ENCODE measurements at regions of chr1 and their contacts with region 1.

Region 1: GRCh38 chr1:150629115-150629928 is at the start of gene ENSA:
- DNase-seq: peak; percentile 97
- H3K4me3 Mint-ChIP-seq: no peak within 1 kb of the TSS
- H3K27ac Mint-ChIP-seq: no peak within 1 kb of the TSS
- H3K4me1 Mint-ChIP-seq: peaks cover 41% of the 10 kb centered on the region
- H3K27me3 Mint-ChIP-seq: no peaks in the 10 kb centered on the region
- total RNA-seq, gene ENSA: 212 to 219 TPM

Region 2: GRCh38 chr1:150567717-150568593 is 61.4 kb before region 1 on chr1:
- CTCF ChIA-PET with region 1: interaction called, 243 read pairs
- POLR2A ChIA-PET with region 1: interaction called, 85 read pairs
- intact Hi-C with region 1: loop called (anchors 1 kb)
- DNase-seq: peak; percentile 68
- H3K4me3 Mint-ChIP-seq: peak overlapping the region; percentile 69
- H3K27ac Mint-ChIP-seq: peak overlapping the region; percentile 98
- H3K4me1 Mint-ChIP-seq: peaks cover 93% of the 10 kb centered on the region
- H3K27me3 Mint-ChIP-seq: no peaks in the 10 kb centered on the region

Region 3: DNA sequence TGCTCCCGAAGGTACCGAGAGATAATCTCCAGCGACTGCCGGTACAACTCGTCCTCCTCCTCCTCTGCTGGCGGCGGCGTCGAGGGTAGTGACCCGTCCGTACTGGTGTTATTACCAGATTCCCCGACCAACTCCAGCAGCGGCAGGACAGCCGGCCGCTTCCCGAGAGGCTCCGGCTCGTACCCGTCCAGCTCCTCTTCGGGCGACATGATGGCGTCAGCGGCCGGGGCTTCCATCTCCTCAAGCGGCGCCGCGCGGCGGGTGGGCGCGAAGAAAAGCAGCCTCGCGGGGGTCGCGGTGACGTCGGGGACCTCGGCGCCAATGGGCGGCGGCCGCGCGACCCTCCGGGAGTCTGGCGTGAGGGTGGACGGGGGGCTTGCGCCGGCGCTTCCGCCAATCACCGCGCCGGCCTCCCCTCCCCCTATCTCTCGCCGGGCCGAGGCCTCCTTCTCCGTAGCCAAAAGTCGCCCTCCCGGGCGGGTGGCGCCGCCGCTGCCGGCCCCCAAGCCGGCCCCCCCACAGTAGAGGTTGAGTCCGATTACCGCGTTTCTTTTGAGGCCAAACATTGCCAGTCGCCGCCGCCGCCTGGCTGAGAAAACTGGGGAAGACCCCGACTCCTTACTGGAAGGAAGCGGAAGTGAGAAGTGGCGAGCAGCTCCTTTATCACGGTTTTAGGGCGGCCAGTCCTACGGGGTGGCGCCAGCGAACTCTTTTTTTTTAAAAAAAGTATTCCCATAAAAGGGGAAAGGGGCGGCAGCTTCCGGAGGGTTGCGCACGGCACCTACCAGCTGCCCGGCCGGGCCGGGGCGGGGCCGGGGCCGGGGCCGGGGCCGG is 50.1 kb before region 1 on chr1 and contains the start of gene MCL1:
- CTCF ChIA-PET with region 1: interaction called, 7 read pairs
- POLR2A ChIA-PET with region 1: interaction called, 54 read pairs
- intact Hi-C with region 1: loop called (anchors 1 kb)
- DNase-seq: peak; percentile 95
- H3K4me3 Mint-ChIP-seq: peak within 1 kb of the TSS; percentile 93
- H3K27ac Mint-ChIP-seq: peak within 1 kb of the TSS; percentile 98
- H3K4me1 Mint-ChIP-seq: peaks cover 27% of the 10 kb centered on the region
- H3K27me3 Mint-ChIP-seq: peaks cover 2% of the 10 kb centered on the region
- total RNA-seq, gene MCL1: 280 to 288 TPM

Region 4: DNA sequence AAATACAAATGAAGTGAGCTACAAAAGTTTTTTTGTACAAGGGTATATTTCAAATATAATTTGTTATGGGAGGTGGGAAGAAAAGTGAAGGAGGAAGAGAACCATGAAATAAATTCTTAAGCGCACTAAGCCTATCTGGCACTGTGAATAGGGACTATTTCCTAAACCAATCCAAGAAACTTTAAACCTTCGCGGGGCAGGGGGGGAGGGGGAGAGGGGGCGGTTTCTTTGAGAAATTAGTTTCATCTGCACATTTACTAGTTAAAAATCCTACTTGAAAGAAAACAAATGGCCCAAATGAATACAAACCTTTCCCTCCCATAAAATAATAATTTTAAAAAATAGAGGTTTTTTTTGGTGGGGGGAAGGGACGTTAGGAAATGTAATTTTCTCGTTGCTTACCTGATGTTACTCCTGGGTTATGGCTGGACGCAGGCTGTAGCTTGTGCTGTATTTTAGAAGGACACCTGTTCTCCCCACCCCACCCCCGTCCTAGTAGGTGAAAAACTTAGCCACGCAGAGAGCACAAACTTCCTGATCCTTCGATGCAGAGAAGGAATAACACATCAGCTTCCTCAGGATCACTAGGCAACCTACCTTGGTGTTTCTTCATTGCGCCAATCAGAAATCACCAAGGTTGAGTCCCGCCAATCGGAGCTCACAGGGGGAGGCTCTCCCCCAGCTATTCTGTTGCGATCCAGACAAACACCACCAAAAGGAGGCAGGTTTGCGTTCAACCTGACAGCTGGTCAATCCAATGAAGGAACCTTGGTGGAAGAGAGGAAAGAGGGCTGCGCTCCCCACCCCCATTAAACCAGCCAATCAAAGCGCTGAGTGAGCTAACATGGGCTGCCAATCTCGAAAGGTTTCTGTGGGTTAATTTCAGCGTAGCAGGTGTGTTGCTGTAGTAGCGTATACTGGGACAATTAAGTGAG is 67.5 kb after region 1 on chr1 and contains the start of gene GOLPH3L:
- CTCF ChIA-PET with region 1: no interaction called
- POLR2A ChIA-PET with region 1: interaction called, 4 read pairs
- intact Hi-C with region 1: loop called (anchors 2 kb)
- DNase-seq: peak; percentile 96
- H3K4me3 Mint-ChIP-seq: peak within 1 kb of the TSS; percentile 96
- H3K27ac Mint-ChIP-seq: peak within 1 kb of the TSS; percentile 84
- H3K4me1 Mint-ChIP-seq: peaks cover 28% of the 10 kb centered on the region
- H3K27me3 Mint-ChIP-seq: no peaks in the 10 kb centered on the region
- total RNA-seq, gene GOLPH3L: 26.1 to 29.1 TPM

Region 5: DNA sequence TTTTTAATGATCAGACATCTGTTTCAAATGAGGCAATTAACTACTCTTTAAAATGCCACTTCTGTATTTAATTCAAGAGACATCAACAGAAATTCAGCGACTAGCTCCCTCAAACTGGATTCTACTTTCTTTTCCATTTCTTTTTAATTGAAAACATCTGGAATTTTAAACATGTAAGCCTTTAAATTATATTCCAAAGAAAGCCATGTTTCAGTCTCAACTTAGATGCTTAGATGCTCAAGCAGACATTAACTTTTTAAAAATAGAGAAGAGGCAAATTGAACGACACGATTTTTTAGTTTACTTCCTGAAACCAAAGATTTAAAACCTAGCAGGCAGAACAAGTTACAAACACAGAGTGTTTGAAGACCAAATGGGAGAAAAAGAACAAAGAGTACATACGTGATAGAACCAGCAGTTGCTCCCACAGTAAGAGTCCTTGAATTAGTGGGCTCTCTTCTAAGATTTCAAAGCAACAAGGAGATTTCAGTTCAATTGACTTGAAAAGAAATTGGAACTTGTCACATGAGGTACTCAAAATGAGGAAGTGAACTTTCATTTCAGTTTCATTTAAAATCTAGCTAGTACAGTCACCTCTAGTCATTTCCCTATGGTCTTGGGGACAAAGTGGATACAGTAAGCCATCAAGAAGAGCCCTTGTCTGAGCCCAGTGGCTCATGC is 136.1 kb after region 1 on chr1 and contains the start of gene CTSS:
- CTCF ChIA-PET with region 1: no interaction called
- POLR2A ChIA-PET with region 1: interaction called, 6 read pairs
- intact Hi-C with region 1: loop called (anchors 5 kb)
- DNase-seq: no peak
- H3K4me3 Mint-ChIP-seq: peak within 1 kb of the TSS; percentile 88
- H3K27ac Mint-ChIP-seq: peak within 1 kb of the TSS; percentile 88
- H3K4me1 Mint-ChIP-seq: peaks cover 45% of the 10 kb centered on the region
- H3K27me3 Mint-ChIP-seq: no peaks in the 10 kb centered on the region
- total RNA-seq, gene CTSS: 39.4 to 45.5 TPM

Region 6: GRCh38 chr1:150876119-150876454 is 246.8 kb after region 1 on chr1:
- CTCF ChIA-PET with region 1: no interaction called
- POLR2A ChIA-PET with region 1: no interaction called
- intact Hi-C with region 1: no loop called
- DNase-seq: no peak
- H3K4me3 Mint-ChIP-seq: peak overlapping the region; percentile 84
- H3K27ac Mint-ChIP-seq: peak overlapping the region; percentile 85
- H3K4me1 Mint-ChIP-seq: peaks cover 30% of the 10 kb centered on the region
- H3K27me3 Mint-ChIP-seq: no peaks in the 10 kb centered on the region